A549 (cell line): ENCODE measurements at regions of chr9 and their contacts with region 1.

Region 1: DNA sequence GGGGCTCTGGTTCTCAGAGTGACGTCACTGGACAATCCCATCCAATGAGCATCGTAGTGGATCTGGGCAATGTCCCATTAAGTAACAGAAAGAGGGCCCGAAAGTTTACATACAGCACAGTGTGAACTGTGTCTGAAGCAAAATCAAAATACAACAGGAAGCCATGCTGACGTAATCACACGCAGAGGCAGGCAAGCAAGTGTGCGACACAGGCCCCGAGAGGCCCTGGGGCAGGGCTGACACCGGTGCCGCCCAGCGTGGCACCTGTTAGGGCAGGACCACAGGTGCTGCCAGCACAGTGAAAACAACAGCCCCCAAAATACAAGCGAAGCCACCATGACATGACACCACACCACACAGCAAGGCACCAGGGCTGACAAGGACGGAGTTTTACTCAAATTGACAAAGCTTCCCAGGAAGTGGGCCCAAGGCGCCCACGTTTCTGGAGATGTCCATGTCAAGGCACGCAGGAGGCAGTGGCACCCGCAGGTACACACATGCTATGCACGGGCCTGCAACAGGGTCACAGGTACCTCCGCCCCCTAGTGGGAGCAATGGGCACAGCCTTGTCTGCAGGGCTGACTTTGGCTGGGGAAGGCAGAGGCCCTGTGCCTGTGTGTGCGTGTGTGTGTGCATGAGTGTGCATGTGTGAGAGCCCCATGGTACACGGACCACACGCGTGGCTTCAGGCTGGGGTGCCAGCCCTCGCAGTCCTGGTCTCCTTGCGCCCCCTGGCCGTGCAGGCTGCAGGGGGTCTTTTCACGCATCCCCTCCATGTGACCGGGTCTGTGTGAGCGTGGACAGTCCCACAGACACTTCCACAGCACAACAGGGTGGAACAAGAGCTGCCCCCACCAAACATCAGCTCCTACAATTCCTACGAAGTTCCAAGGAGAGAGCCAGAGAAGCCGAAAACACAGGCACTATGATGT is 19.6 kb downstream of the QSOX2 start:
- DNase-seq: peak; percentile 72 to 74
- ATAC-seq: peak; percentile 91 to 95
- H3K4me3 ChIP-seq: no peak overlapping the region
- H3K27ac ChIP-seq: no peak overlapping the region
- H3K4me1 ChIP-seq: peaks cover 18% of the 10 kb centered on the region
- CTCF ChIP-seq: peak; percentile 72
- EP300 ChIP-seq: no peak
- POLR2A ChIP-seq: no peak
- RAD21 ChIP-seq: peak; percentile 36 to 58; a peak in 4 of 5 replicates

Region 2: GRCh38 chr9:136201609-136202453 is 24.2 kb before region 1 on chr9:
- CTCF ChIA-PET with region 1: interaction called, 30 read pairs
- POLR2A ChIA-PET with region 1: no interaction called
- DNase-seq: no peak
- ATAC-seq: peak; percentile 27 to 41; a peak in 3 of 6 replicates
- H3K4me3 ChIP-seq: no peak overlapping the region
- H3K27ac ChIP-seq: no peak overlapping the region
- H3K4me1 ChIP-seq: peaks cover 10% of the 10 kb centered on the region; the same call in 1 of the 3 replicates
- CTCF ChIP-seq: no peak
- EP300 ChIP-seq: no peak
- POLR2A ChIP-seq: no peak
- RAD21 ChIP-seq: no peak

Region 3: GRCh38 chr9:136245219-136246150 is 19.5 kb after region 1 on chr9 and contains the start of gene QSOX2:
- CTCF ChIA-PET with region 1: interaction called, 10 read pairs
- POLR2A ChIA-PET with region 1: no interaction called
- DNase-seq: peak; percentile 70 to 87
- ATAC-seq: peak; percentile 66 to 70
- H3K4me3 ChIP-seq: peak within 1 kb of the TSS; percentile 83
- H3K27ac ChIP-seq: peak within 1 kb of the TSS; percentile 80 to 97
- H3K4me1 ChIP-seq: peaks cover 17% of the 10 kb centered on the region
- CTCF ChIP-seq: no peak
- EP300 ChIP-seq: no peak
- POLR2A ChIP-seq: peak; percentile 60
- RAD21 ChIP-seq: no peak
- polyA plus RNA-seq, gene QSOX2: 29.5 and 30.2 TPM in 2 replicates

Region 4: DNA sequence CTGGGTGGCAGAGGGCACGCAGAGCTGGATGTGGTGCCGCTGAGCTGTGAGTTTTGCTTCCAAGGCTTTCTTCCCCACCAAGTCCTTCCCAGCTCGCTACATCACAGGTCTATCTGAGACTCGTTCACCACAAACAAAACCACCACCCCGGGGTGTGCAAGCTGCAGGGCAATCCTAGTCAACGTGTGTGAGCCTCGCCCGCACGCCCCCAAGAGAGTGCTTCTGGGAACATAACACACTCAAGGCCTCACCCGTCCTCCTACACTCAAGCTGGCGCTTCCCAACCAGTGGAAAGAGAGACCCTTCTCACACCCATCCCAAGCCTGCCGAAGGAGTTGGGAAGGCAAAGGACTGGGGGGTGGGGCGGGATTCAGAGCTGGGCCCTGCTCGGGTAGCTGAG is 163.4 kb after region 1 on chr9:
- CTCF ChIA-PET with region 1: no interaction called
- POLR2A ChIA-PET with region 1: no interaction called
- DNase-seq: no peak
- ATAC-seq: no peak
- H3K4me3 ChIP-seq: no peak overlapping the region
- H3K27ac ChIP-seq: no peak overlapping the region
- H3K4me1 ChIP-seq: no peaks in the 10 kb centered on the region
- CTCF ChIP-seq: no peak
- EP300 ChIP-seq: no peak
- POLR2A ChIP-seq: no peak
- RAD21 ChIP-seq: no peak